Activated naive CD4-positive, alpha-beta T cell treated with anti-CD3 and anti-CD28 coated beads, Interleukin-2, amount 10 ng/mL, durations not matched to agents 7 days and 5 days (primary cell): ENCODE measurements at regions of chr15 and their contacts with region 1.

Region 1: DNA sequence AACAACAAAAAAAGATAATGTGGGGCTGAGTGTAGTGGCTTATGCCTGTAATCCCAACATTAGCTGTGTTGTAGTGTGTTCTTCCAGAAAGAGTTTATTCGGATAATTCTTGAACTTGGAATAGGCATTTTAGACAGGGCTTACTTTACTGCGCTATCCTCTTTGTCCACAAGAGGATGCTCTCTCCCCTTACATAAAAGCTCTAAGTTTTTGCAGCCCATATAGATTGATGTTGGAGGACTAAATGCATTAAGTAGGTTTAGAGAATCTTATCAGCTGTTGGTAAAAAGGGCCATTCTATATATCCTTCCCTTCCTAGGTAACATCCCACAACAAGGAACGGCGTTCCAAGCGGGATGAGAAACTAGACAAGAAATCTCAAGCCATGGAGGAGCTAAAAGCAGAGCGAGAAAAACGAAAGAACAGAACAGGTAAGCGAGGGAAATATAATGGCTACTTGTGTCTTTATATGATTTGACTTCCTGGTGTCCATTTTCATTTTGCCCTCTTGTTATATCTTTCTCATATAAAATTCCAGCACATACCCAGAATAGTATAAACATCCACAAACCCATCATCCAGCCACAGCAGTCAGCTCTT is 27.8 kb upstream of the ITPKA start:
- DNase-seq: peak; percentile 49
- H3K4me3 Mint-ChIP-seq: no peak overlapping the region
- H3K27ac Mint-ChIP-seq: no peak overlapping the region
- H3K4me1 Mint-ChIP-seq: no peaks in the 10 kb centered on the region
- H3K27me3 Mint-ChIP-seq: no peaks in the 10 kb centered on the region

Region 2: DNA sequence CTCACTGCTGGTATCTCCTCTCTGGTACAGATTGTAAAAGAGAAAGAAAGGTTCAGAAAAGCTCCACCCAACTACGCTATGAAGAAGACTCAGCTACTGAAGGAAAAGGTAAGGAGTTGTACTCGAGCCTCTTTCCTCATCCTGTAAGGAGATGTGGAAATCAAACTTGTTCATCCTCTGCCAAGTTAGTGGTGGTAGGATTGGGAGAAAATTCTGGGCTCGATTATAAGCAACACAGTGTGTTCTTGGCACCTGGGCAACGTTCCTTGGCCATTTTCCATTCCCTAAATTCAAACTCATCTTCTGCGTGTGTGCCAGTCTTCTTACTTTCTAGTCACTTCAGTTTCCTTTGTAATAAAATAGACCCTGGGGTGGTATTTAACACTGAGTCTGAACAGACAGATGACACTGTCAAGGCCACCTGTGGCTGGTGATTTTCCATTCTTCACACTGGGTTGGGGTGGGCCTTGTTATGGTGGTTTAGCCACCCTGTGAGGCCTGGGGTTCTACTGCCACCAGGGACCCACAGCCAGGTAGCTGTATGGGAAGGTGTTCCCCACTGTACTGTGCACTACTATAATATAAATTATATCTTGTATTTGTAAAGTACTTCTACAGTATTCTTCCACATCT is 10.6 kb after region 1 on chr15:
- CTCF ChIA-PET with region 1: interaction called, 15 read pairs
- DNase-seq: no peak
- H3K4me3 Mint-ChIP-seq: no peak overlapping the region
- H3K27ac Mint-ChIP-seq: no peak overlapping the region
- H3K4me1 Mint-ChIP-seq: no peaks in the 10 kb centered on the region
- H3K27me3 Mint-ChIP-seq: no peaks in the 10 kb centered on the region

Region 3: DNA sequence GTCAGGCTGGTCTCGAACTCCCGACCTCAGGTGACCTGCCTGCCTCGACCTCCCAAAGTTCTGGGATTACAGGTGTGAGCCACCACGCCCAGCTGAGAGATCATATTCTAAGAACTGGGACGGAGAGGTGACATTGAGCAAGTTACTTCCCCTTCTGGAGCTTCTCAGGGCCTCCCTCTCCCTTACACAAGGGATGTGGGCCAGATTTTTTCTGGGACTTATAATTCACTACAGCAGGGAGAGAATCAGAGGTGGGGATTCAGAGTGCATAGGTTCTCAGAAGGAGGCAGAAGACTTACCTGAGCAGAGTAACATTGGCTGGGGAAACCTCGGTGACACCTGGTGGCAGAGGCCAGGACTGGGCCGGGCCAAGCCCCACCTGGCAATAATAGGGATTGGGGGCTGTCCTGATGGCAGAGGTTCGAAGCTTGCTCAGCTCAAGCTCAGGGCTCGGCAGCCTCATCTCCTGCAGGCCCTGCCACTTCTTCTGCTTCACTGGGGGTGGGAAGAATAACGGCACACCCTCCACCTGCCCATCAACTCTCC is 40.9 kb after region 1 on chr15:
- CTCF ChIA-PET with region 1: interaction called, 26 read pairs
- DNase-seq: no peak
- H3K4me3 Mint-ChIP-seq: no peak overlapping the region
- H3K27ac Mint-ChIP-seq: no peak overlapping the region
- H3K4me1 Mint-ChIP-seq: peaks cover 15% of the 10 kb centered on the region
- H3K27me3 Mint-ChIP-seq: peaks cover 96% of the 10 kb centered on the region

Region 4: DNA sequence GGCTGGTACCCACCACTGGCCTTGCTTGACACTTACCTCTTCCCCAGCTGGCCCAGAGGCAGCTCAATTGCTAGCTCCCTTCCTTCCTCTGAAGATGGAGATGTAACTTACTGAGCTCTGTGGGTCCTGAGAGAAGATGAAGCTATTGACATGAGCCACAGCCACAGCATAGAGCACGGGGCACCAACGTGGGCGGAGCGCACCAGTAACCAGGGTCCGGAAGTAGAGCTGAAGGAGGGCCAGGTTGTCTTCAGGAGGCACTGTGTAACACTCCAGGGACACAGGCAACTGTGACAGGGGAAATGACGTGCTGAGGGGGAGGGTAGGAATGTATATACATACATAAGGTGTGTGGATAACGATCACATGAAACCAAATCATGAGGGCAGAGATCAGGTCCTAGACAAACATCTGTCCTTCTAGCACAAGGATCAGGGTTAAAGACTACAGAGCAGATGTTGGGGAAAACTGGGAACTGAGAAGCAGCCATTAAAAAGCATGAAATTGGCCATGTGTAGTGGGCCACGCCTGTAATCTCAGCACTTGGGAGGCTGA is 52.0 kb after region 1 on chr15:
- CTCF ChIA-PET with region 1: no interaction called
- DNase-seq: no peak
- H3K4me3 Mint-ChIP-seq: no peak overlapping the region
- H3K27ac Mint-ChIP-seq: no peak overlapping the region
- H3K4me1 Mint-ChIP-seq: peaks cover 19% of the 10 kb centered on the region
- H3K27me3 Mint-ChIP-seq: peaks cover 15% of the 10 kb centered on the region

Region 5: DNA sequence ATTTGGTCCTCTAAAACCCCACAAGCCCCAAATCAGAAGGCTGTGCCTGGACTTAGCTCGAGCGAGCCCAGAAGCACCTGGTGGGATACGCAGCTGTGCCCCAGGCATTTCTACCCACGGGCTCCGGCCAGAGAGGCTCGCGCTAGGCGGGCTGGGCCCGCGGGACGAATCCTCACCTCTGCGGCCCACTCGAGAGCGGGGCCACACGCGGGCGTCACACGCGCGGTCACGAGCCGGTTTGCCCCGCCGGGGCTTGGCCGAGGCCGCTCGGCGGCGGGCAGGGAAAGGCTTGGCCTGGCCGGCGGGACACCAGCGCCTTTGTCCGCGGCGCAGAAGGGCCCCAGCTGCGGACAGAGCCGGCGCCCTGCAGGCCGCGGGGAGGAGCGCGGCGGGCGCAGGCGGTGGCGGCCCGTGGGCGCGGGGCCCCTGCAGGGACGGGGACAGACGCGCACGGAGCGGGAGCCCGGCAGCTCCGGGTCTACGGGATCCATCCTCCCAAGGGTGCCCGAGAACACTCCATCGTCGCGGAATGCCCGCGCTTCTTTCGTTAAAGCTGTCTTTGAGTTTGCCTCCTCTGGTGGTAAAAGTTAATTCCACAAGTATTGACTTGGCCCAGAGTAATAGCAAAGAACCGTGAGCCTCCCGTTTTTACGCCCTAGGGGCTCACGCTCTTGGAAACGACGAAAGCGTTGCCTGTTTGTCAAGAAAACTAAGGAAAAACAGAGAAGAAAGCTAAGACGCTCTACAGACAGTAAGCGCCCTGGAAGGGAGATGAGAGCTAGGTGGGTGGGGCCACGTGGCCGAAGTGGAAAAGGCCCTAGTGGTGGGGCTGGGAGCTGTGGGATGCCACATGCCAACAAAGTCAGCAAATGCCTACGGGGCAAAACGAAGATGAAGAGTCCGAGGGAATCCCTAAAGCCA is 119.5 kb after region 1 on chr15:
- CTCF ChIA-PET with region 1: interaction called, 11 read pairs
- DNase-seq: peak; percentile 38
- H3K4me3 Mint-ChIP-seq: peak overlapping the region; percentile 61
- H3K27ac Mint-ChIP-seq: no peak overlapping the region
- H3K4me1 Mint-ChIP-seq: peaks cover 8% of the 10 kb centered on the region
- H3K27me3 Mint-ChIP-seq: peaks cover 83% of the 10 kb centered on the region